Posterior vena cava (tissue), 2 donors: ENCODE measurements at regions of chr19 and their contacts with region 1.

Region 1: DNA sequence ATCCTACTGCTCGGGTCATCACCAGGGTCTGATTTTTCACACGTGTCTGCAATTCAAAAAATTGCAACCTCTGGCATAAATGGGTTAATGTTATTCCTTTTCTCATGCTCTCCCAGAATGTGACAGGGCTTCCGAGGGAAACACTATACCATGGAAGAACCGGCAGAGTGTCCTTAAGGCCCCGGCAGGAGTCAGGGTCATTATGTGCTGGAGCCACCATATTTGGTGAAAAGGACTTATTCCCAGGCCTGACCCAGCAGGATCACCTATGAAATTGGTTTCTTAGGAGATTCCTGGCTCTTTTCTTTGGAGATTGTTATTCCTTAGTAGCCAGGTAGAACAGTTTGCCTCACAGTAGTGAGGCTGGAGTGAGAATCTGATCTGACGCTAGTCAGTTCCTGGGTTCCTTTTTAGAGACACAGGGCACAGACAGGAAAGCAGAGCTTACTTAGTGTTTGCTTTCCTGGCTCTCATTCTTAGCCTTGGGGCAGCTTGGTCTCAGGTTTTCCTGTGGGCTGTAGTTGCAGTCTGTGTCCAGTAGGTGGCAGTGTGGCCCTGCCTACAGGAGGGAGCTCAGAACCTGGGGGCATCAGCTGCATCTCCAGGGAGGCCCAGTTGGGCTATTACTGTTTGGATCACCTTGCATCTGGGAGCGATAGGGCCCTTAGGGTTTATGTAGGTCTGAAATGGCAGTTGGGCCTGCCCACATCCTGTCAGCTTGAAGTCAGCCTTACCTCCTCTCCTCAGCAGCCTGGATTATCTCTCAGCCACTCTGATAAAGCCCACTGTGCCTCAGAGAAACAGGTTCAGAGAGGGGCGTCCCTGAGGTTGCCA is 12.4 kb downstream of the SNRNP70 start:
- DNase-seq: no peak

Region 2: GRCh38 chr19:49200238-49200862 is 102.7 kb after region 1 on chr19:
- intact Hi-C with region 1: loop called in 1 of 2 experiments (anchors 5 kb)
- DNase-seq: peak; percentile 73